Stomach (tissue), 19 donors: ENCODE measurements at regions of chr7 and their contacts with region 1.

Region 1: DNA sequence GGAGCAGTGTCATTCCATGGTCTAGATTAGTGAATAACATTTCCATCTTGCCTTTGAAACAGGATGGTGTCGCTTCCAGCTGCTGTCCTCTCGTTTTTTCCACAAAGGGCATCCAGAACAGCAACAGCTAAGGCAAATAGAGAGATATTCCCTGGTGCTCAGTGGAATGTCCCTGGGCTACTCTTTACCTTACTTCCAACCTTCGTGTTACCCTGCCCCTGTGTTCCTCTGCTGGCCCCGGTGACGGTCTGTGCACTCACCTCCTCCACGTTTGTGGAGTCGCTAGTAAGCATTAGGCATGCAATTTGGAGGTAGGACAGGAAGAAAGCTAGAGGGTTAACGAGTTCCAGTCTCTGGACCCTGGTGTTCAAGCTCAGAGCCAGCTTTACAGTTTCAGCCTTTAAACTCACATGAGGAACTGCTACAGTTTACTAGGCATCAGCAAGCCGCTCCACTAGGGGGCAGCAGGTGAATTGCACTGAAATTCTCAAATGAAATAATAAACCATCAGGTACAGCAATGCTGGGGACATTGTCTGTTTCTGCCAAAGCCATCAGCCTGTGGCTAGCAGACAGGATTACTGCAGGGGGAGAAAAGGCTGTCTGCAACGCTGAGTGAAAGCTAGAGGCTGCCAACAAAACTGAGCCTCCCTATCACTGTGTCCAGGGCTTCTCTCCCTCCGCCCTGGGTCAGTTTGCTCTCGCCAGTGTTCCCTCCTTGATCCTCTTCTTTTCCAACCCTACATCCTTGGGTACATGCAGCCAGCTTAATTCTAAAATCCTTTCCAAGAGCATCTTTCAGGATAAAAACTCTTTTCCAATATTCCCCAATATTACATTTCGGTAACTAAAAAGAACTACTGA is 9.0 kb downstream of the MRPL32 start:
- DNase-seq: peak; percentile 81 to 91
- H3K4me3 ChIP-seq: no peak overlapping the region
- H3K27ac ChIP-seq: no peak overlapping the region
- H3K4me1 ChIP-seq: peaks cover 0 to 3% (median 1%) of the 10 kb centered on the region in 4 donors
- H3K27me3 ChIP-seq: no peaks in the 10 kb centered on the region
- CTCF ChIP-seq: peak in 5 of 7 experiments; percentile 65 to 87 (median 80)
- EP300 ChIP-seq: no peak
- POLR2A ChIP-seq: no peak

Region 2: GRCh38 chr7:43112941-43113621 is 171.9 kb after region 1 on chr7:
- intact Hi-C with region 1: loop called (anchors 10 kb)
- DNase-seq: peak in 1 of 2 donors; percentile 86
- H3K4me3 ChIP-seq: peak overlapping the region; percentile 33 to 53 (median 36)
- H3K27ac ChIP-seq: no peak overlapping the region
- H3K4me1 ChIP-seq: peaks cover 13 to 29% (median 25%) of the 10 kb centered on the region in 4 donors
- H3K27me3 ChIP-seq: peaks cover 15 to 83% (median 47%) of the 10 kb centered on the region in 3 donors
- CTCF ChIP-seq: no peak
- EP300 ChIP-seq: no peak
- POLR2A ChIP-seq: no peak

Region 3: GRCh38 chr7:43260980-43261878 is 320.0 kb after region 1 on chr7:
- intact Hi-C with region 1: loop called (anchors 5 kb)
- DNase-seq: peak; percentile 78 to 89
- H3K4me3 ChIP-seq: no peak overlapping the region
- H3K27ac ChIP-seq: no peak overlapping the region
- H3K4me1 ChIP-seq: peaks cover 0 to 7% (median 3%) of the 10 kb centered on the region in 4 donors
- H3K27me3 ChIP-seq: no peaks in the 10 kb centered on the region
- CTCF ChIP-seq: peak in 5 of 7 experiments; percentile 54 to 92 (median 87)
- EP300 ChIP-seq: no peak
- POLR2A ChIP-seq: no peak